A673 (cell line): ENCODE measurements at regions of chr11 and their contacts with region 1.

Region 1: DNA sequence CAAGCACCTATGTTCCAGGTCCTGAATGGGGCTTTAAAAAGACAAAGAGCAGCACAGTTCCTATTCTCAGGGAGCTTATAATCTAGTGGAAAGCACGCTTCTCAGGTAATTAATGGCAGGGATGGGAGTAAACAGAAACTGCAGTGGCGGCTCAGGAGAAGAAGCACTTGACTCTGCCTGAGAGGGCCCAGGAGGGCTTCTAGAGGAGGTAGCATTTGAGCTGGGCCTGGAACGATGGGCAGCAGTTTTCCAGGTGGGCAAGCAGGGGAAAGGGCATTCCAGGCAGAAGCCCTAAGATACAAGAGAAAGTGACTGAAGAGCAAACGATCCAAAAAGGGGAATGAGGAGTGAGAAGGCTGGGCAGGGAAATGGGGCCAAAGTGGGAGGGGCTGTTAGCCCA is 37.1 kb upstream of the CHST1 start:
- DNase-seq: no peak
- H3K4me3 ChIP-seq: no peak overlapping the region
- H3K27ac ChIP-seq: no peak overlapping the region
- H3K4me1 ChIP-seq: no peaks in the 10 kb centered on the region
- H3K27me3 ChIP-seq: no peaks in the 10 kb centered on the region
- CTCF ChIP-seq: no peak

Region 2: DNA sequence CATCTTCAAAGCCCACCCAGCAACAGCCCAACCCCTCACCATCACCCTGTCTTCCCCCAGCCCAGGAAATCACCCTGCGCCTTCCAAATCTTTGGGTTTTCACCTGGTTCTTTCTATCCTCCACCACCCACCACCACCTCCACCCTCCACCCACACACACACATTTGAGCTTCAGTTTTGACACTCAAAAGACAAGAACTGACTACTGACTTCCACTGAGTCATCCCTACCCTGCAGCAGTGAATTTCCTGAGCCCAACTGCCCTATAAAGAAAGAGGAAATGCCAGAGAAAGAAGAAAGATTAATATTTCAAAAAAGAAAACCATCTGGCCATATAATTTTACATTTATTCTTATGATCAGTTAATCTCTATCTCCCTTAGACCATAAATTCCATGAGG is 174.6 kb before region 1 on chr11:
- CTCF ChIA-PET with region 1: no interaction called
- POLR2A ChIA-PET with region 1: interaction called, 10 read pairs
- intact Hi-C with region 1: no loop called
- DNase-seq: no peak
- H3K4me3 ChIP-seq: no peak overlapping the region
- H3K27ac ChIP-seq: no peak overlapping the region
- H3K4me1 ChIP-seq: no peaks in the 10 kb centered on the region
- H3K27me3 ChIP-seq: no peaks in the 10 kb centered on the region
- CTCF ChIP-seq: no peak

Region 3: GRCh38 chr11:46039990-46040389 is 337.5 kb after region 1 on chr11:
- CTCF ChIA-PET with region 1: no interaction called
- POLR2A ChIA-PET with region 1: no interaction called
- intact Hi-C with region 1: no loop called
- DNase-seq: no peak
- H3K4me3 ChIP-seq: no peak overlapping the region
- H3K27ac ChIP-seq: no peak overlapping the region
- H3K4me1 ChIP-seq: no peaks in the 10 kb centered on the region
- H3K27me3 ChIP-seq: no peaks in the 10 kb centered on the region
- CTCF ChIP-seq: no peak

Region 4: DNA sequence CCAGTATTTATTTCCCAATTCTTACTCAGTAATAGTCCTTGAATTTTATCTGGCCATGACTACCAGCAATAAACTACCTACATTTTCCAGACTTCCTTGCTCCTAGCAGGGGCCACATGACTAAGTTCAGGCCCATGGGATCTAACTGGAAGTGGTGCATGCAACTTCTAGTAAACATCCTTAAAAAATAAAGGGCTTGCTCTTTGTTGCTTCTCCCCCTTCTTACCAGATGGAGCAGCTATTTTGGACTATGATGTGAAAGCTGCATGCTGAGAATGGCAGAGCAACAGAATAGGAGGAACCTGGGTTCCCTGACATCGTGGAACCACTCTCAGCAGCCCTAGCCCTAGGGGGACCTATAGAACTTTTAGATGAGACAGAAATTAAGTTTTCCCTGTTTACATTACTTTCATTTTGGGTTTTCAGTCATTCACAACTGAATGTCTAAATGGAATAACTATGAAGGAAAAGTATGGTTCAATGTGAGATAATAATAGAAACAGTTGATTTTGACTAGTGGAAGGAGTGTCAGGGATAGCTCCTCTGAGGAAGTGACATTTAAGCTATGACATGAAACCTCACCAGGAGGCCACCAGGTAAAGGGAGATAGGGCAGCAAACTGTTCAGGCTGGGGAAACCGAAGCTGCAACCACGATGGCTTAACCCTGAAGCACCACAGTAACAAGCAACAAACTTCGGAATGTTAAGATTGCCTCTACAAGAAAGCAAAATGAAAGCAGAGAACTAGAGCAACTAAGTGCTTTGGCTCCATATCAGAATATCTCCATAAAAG is 369.9 kb after region 1 on chr11:
- CTCF ChIA-PET with region 1: no interaction called
- POLR2A ChIA-PET with region 1: no interaction called
- intact Hi-C with region 1: no loop called
- DNase-seq: no peak
- H3K4me3 ChIP-seq: no peak overlapping the region
- H3K27ac ChIP-seq: no peak overlapping the region
- H3K4me1 ChIP-seq: no peaks in the 10 kb centered on the region
- H3K27me3 ChIP-seq: no peaks in the 10 kb centered on the region
- CTCF ChIP-seq: no peak